ENCODE measurements at regions of chr7 and their contacts with region 1.

Region 1: DNA sequence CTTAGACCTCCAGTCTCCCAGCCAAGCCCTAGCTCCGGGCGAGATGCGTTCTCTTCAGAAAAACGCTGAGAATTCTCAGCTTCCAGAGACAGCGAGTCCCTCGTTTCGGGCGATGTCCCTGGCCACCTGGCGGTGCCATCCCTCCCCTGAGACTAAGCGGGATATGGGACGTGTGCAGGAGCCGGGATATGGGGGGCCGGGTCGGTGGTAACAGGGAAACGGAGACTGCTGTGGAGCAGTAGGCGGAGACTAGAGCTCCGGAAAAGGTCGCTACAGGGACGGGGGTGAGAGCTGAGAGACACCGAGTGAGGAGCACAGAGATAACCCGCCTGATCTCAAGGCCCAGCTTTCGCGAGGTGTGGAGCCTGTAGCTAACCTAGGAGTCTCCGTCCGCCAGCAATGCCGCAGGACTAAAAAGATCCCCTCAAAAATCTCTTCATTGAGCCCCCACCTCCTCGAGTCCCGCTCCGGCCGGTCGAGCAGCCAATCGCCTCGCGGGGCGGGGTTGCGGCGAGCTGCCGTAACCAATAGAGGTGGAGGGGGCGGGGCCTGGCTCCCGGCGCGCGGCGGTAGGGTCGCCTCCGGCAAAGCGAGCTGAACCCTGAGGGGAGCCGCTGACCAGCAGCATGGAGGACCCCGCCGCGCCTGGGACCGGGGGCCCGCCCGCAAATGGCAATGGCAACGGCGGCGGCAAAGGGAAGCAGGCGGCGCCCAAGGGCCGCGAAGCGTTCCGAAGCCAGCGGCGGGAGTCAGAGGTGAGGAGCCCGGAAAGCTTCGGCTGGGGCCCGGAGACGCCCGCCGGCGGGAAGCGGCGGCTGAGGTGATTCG is at the start of gene STRIP2:
- DNase-seq: peak; percentile 95
- H3K4me3 Mint-ChIP-seq: peak within 1 kb of the TSS; percentile 86
- H3K27ac Mint-ChIP-seq: peak within 1 kb of the TSS; percentile 83
- H3K4me1 Mint-ChIP-seq: peaks cover 28% of the 10 kb centered on the region
- H3K27me3 Mint-ChIP-seq: peaks cover 6% of the 10 kb centered on the region
- total RNA-seq, gene STRIP2: 56.1 to 62.0 TPM

Region 2: DNA sequence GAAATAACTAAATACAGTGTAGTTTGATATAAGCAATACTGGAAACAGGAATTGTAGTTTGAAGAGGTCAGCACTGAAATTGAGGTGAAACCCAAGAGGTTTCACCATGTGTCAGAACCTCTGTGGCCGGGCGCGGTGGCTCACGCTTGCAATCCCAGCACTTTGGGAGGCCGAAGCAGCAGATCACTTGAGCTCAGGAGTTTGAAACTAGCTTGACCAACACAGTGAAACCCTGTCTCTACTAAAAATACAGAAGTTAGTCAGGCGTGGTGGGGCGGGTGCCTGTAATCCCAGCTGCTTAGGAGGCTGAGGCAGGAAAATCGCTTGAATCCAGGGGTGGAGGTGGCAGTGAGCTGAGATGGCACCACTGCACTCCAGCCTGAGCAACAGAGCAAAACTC is 195.5 kb before region 1 on chr7:
- CTCF ChIA-PET with region 1: no interaction called
- POLR2A ChIA-PET with region 1: no interaction called
- intact Hi-C with region 1: no loop called
- DNase-seq: no peak
- H3K4me3 Mint-ChIP-seq: no peak overlapping the region
- H3K27ac Mint-ChIP-seq: no peak overlapping the region
- H3K4me1 Mint-ChIP-seq: peaks cover 2% of the 10 kb centered on the region
- H3K27me3 Mint-ChIP-seq: no peaks in the 10 kb centered on the region

Region 3: DNA sequence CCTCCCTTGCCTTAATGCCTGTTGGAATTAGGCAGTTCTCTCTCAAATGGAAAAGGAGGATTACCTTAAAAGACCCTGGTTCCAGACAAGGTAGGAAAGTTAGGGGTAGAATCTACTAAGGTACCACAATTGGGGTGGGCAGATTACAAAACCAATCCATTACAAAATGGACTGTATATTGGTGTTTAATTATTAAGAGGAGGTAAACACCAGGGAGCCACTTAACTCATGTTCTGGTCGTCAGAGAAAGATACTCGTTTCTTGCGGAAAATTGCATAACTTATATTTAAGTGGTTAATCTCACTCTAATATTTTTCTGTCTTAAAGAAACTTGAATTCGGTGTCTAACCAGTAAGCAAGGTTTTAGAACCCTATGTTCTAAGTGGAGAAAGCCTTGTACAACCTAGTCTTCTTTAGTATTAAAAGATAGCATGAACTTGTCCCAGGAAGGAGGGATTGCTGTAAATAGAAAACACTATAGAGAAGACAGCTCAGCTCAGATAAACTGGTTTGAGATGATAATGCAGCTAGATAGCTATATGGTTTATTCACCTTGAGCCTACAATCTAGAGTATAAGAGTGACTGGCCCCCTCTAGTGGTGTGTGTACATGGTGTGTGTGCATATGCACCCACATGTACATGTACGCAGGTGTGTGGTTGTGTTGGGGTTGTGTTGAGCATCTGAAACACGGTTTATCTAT is 57.8 kb before region 1 on chr7:
- CTCF ChIA-PET with region 1: interaction called, 28 read pairs
- POLR2A ChIA-PET with region 1: interaction called, 3 read pairs
- intact Hi-C with region 1: loop called (anchors 2 kb)
- DNase-seq: peak; percentile 68
- H3K4me3 Mint-ChIP-seq: no peak overlapping the region
- H3K27ac Mint-ChIP-seq: no peak overlapping the region
- H3K4me1 Mint-ChIP-seq: peaks cover 25% of the 10 kb centered on the region
- H3K27me3 Mint-ChIP-seq: no peaks in the 10 kb centered on the region

Region 4: DNA sequence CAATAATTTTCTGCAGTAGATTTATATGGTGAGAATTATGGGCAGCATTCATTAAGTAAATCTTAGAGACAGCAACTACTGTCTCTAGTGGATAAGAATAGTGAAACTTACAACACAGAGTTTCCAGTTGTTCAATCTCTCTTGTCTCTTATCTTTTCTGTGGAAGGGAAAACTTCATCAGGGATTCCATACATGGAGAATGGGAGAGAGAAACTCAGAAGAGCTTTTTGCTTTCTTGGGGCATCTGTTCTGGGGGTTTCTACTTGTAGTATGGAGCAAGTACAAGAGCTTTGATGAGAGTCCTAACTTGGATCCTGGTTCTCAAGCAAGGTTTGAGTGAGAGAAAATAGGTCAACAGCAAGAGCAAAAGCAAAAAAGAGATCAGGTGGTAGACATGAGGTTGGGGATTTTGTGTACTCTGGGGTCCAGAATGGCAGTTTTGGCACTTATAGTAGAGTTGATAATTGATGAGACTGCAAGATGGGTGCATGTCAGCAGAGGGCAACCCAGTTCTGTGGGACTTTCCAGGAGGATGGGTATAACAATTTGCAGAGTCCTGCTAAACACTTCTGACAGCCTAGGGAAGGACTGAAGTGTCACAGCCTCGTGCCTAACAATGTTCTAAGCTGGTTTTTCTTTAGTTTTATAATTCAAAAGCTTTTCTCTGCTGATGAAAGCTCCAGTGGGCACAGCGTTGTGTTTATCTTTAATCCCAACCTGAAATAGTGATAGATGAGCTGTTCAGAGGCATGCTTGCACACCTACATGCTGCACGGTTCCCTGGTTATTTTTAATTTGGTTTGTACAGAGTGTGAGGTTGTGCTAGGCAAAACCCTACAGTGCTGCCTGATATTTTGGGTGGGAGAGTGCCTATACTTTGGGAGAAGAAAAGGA is 31.8 kb before region 1 on chr7:
- CTCF ChIA-PET with region 1: interaction called, 13 read pairs
- POLR2A ChIA-PET with region 1: interaction called, 4 read pairs
- intact Hi-C with region 1: loop called (anchors 1 kb)
- DNase-seq: peak; percentile 56
- H3K4me3 Mint-ChIP-seq: no peak overlapping the region
- H3K27ac Mint-ChIP-seq: peak overlapping the region; percentile 29
- H3K4me1 Mint-ChIP-seq: peaks cover 37% of the 10 kb centered on the region
- H3K27me3 Mint-ChIP-seq: no peaks in the 10 kb centered on the region

Region 5: DNA sequence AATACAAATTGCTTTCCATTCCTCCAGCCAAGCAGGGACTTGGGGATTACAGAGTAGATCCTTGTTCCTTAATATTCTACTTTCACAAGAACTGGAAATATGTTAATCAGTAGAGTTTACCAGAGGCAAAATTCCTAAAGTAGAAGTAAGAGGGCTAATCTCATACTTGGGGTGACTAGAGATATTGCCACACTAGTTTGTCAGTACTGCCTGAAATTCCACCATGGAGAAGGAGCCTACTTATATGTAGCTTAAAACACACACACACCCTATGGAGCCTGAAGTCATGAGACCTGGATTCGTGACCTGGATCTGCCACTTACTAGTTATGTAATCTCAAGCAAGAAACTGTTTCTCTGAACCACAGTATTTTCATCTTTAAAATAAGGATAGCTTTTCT is 34.0 kb after region 1 on chr7:
- CTCF ChIA-PET with region 1: interaction called, 11 read pairs
- POLR2A ChIA-PET with region 1: interaction called, 4 read pairs
- intact Hi-C with region 1: loop called (anchors 1 kb)
- DNase-seq: no peak
- H3K4me3 Mint-ChIP-seq: no peak overlapping the region
- H3K27ac Mint-ChIP-seq: no peak overlapping the region
- H3K4me1 Mint-ChIP-seq: peaks cover 13% of the 10 kb centered on the region
- H3K27me3 Mint-ChIP-seq: no peaks in the 10 kb centered on the region

Region 6: GRCh38 chr7:129530795-129531391 is 96.8 kb after region 1 on chr7:
- CTCF ChIA-PET with region 1: no interaction called
- POLR2A ChIA-PET with region 1: no interaction called
- intact Hi-C with region 1: loop called (anchors 2 kb)
- DNase-seq: peak; percentile 86
- H3K4me3 Mint-ChIP-seq: no peak overlapping the region
- H3K27ac Mint-ChIP-seq: peak overlapping the region; percentile 19
- H3K4me1 Mint-ChIP-seq: peaks cover 9% of the 10 kb centered on the region
- H3K27me3 Mint-ChIP-seq: peaks cover 11% of the 10 kb centered on the region

Region 7: DNA sequence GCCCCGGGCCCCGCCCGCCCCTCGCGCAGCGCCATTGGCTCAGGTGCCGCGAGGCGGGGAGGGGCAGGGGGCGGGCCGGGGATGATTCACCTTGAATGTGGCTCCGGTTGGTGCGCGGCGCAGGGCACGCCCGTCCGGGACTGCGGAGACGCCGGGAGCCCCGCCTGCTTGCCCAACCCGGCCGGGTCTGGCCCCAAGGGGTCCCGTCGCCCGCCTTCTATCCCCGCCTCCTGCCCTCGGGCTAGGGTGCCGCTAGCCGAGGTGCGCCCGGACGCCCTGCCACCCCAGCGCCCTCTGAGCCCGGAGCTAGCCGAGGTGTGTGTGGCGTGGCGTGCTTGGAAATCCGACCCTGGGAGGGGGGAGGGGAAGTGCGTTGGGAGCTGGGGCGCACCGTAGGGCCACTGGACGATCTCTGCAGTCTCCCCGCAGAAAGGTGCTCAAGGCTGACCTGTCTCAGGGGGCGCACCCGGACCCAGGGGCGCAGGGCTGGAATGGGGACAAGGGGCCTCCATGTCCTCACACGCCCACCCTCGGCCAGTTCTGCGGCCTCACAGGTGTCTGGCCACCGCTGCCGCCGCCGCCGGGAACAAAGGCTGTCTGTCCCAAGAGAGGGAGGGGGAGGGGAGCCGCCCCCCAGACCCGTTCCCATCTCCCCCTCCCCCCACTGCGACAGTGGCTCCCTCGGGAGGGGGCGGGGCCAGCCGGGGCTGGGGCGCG is 346.4 kb after region 1 on chr7:
- CTCF ChIA-PET with region 1: no interaction called
- POLR2A ChIA-PET with region 1: no interaction called
- intact Hi-C with region 1: loop called (anchors 5 kb)
- DNase-seq: peak; percentile 88
- H3K4me3 Mint-ChIP-seq: peak overlapping the region; percentile 64
- H3K27ac Mint-ChIP-seq: no peak overlapping the region
- H3K4me1 Mint-ChIP-seq: peaks cover 29% of the 10 kb centered on the region
- H3K27me3 Mint-ChIP-seq: peaks cover 57% of the 10 kb centered on the region

Region 8: GRCh38 chr7:129882531-129882930 is 448.5 kb after region 1 on chr7:
- CTCF ChIA-PET with region 1: no interaction called
- POLR2A ChIA-PET with region 1: no interaction called
- intact Hi-C with region 1: no loop called
- DNase-seq: no peak
- H3K4me3 Mint-ChIP-seq: no peak overlapping the region
- H3K27ac Mint-ChIP-seq: no peak overlapping the region
- H3K4me1 Mint-ChIP-seq: peaks cover 31% of the 10 kb centered on the region
- H3K27me3 Mint-ChIP-seq: no peaks in the 10 kb centered on the region

Region 9: GRCh38 chr7:129952653-129953560 is 518.8 kb after region 1 on chr7 and contains the start of gene UBE2H:
- CTCF ChIA-PET with region 1: no interaction called
- POLR2A ChIA-PET with region 1: interaction called, 6 read pairs
- intact Hi-C with region 1: loop called (anchors 2 kb)
- DNase-seq: peak; percentile 94
- H3K4me3 Mint-ChIP-seq: peak within 1 kb of the TSS; percentile 87
- H3K27ac Mint-ChIP-seq: peak within 1 kb of the TSS; percentile 90
- H3K4me1 Mint-ChIP-seq: peaks cover 7% of the 10 kb centered on the region
- H3K27me3 Mint-ChIP-seq: no peaks in the 10 kb centered on the region
- total RNA-seq, gene UBE2H: 33.6 to 37.1 TPM

Measured in activated CD4-positive, alpha-beta memory T cell treated with anti-CD3 and anti-CD28 coated beads for 36 hours (primary cell).